Activated naive CD8-positive, alpha-beta T cell treated with anti-CD3 and anti-CD28 coated beads, Interleukin-2, amount 10 ng/mL, durations not matched to agents 7 days and 5 days (primary cell): ENCODE measurements at regions of chr1 and their contacts with region 1.

Region 1: DNA sequence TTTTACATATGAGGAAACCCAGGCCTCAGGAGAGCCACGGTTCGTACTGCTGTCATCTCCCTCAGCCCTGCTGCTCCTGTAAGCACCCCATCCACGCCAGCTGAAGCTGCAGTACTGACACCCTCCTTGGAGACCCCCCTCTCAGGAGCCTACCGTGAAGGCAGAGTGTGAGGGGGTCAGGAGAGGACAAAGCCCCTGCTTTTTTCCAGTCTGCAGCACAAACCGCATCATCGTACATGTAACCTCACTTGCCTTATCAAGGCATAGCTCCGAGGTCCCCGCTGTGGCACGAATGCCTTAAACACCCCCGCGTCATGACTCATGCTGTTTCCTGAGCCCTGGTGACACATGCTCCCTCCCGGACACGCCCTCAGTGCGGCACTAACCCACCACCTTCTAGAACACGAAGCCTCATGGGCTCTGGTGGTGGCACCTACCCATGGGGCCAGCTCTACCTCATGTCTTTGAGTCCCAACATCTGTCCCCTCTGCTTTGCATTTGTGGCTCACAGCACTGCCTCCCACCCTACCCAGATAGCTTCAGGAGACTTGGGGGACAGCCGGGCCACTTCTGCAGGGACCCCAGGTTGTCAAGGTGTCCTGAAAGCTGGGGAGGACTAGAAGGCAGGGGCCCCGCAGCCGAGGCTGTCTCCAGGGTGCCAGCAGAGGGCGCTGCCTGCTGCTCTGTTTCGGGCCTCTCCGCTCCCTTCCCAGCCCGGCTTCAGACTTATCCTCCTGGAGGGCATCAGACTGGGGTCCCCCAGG is 4.9 kb downstream of the SH3BGRL3 start:
- DNase-seq: peak; percentile 85
- ATAC-seq: peak; percentile 63
- H3K4me3 Mint-ChIP-seq: peak overlapping the region; percentile 89
- H3K27ac Mint-ChIP-seq: peak overlapping the region; percentile 99
- H3K4me1 Mint-ChIP-seq: peaks cover 71% of the 10 kb centered on the region
- H3K27me3 Mint-ChIP-seq: no peaks in the 10 kb centered on the region

Region 2: GRCh38 chr1:26259578-26259977 is 25.2 kb before region 1 on chr1:
- POLR2A ChIA-PET with region 1: no interaction called
- DNase-seq: no peak
- ATAC-seq: no peak
- H3K4me3 Mint-ChIP-seq: no peak overlapping the region
- H3K27ac Mint-ChIP-seq: no peak overlapping the region
- H3K4me1 Mint-ChIP-seq: no peaks in the 10 kb centered on the region
- H3K27me3 Mint-ChIP-seq: no peaks in the 10 kb centered on the region

Region 3: DNA sequence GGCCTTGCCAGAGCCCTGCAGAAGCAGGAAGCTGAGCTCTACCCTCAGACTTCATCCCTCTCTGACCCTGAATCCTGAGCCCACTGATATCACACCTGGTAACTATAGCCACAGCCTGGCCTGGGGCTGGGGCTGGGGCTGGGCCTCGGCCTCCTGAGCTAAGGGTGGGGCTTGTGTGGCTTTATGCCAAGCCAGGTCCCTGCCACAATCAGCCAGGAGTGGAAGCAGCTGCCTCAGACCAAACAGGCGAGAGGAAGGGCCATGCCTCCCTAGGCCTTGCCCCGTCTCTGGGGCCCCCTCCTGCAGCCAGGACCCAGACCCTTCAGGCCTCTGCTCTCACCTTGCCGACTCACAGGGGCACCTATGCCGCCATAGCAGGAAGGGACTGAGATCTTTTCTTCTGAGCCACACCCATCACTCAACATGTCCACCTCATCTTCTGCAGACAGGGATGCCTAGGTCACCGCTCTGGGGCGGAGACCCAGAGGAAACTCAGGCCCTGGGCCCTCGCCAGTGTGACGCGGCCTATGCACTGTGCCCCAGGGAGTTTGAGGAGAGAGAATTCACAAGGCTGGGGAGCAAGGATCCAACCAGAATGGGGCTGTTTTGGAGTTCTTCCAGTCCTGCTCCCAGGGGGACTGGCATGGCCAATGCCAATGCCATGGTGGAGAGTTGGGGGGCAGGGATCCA is 16.0 kb after region 1 on chr1:
- POLR2A ChIA-PET with region 1: interaction called, 1,079 read pairs
- DNase-seq: no peak
- ATAC-seq: no peak
- H3K4me3 Mint-ChIP-seq: no peak overlapping the region
- H3K27ac Mint-ChIP-seq: peak overlapping the region; percentile 54
- H3K4me1 Mint-ChIP-seq: peaks cover 15% of the 10 kb centered on the region
- H3K27me3 Mint-ChIP-seq: no peaks in the 10 kb centered on the region

Region 4: GRCh38 chr1:26358411-26359384 is 73.9 kb after region 1 on chr1:
- POLR2A ChIA-PET with region 1: interaction called, 17 read pairs
- DNase-seq: peak; percentile 72
- ATAC-seq: peak; percentile 86
- H3K4me3 Mint-ChIP-seq: peak overlapping the region; percentile 63
- H3K27ac Mint-ChIP-seq: peak overlapping the region; percentile 76
- H3K4me1 Mint-ChIP-seq: peaks cover 46% of the 10 kb centered on the region
- H3K27me3 Mint-ChIP-seq: peaks cover 6% of the 10 kb centered on the region

Region 5: DNA sequence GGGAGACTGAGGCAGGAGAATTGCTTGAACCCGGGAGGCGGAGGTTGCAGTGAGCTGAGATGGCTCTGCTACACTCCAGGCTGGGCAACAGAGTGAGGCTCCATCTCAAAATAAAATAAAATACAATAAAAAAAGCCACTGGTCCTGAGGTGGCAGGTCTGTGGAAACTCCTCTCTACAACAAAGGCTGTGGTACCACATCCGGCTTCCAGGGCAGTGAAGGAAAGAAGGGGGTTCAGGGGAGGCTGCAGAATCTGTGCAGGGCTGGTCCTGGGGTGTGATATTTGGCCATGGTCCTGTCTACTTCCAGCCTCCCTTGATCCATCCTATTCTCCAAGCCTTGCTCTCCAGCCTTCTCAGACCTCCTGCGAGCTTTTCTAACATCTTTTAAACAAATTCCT is 88.5 kb after region 1 on chr1:
- POLR2A ChIA-PET with region 1: interaction called, 13 read pairs
- DNase-seq: no peak
- ATAC-seq: peak; percentile 57
- H3K4me3 Mint-ChIP-seq: peak overlapping the region; percentile 68
- H3K27ac Mint-ChIP-seq: peak overlapping the region; percentile 82
- H3K4me1 Mint-ChIP-seq: peaks cover 70% of the 10 kb centered on the region
- H3K27me3 Mint-ChIP-seq: no peaks in the 10 kb centered on the region

Region 6: GRCh38 chr1:26391450-26391849 is 106.7 kb after region 1 on chr1:
- POLR2A ChIA-PET with region 1: interaction called, 11 read pairs
- DNase-seq: no peak
- ATAC-seq: peak; percentile 66
- H3K4me3 Mint-ChIP-seq: peak overlapping the region; percentile 60
- H3K27ac Mint-ChIP-seq: peak overlapping the region; percentile 82
- H3K4me1 Mint-ChIP-seq: peaks cover 55% of the 10 kb centered on the region
- H3K27me3 Mint-ChIP-seq: peaks cover 4% of the 10 kb centered on the region